Endothelial cell of umbilical vein (primary cell): ENCODE measurements at regions of chr6 and their contacts with region 1.

Region 1: DNA sequence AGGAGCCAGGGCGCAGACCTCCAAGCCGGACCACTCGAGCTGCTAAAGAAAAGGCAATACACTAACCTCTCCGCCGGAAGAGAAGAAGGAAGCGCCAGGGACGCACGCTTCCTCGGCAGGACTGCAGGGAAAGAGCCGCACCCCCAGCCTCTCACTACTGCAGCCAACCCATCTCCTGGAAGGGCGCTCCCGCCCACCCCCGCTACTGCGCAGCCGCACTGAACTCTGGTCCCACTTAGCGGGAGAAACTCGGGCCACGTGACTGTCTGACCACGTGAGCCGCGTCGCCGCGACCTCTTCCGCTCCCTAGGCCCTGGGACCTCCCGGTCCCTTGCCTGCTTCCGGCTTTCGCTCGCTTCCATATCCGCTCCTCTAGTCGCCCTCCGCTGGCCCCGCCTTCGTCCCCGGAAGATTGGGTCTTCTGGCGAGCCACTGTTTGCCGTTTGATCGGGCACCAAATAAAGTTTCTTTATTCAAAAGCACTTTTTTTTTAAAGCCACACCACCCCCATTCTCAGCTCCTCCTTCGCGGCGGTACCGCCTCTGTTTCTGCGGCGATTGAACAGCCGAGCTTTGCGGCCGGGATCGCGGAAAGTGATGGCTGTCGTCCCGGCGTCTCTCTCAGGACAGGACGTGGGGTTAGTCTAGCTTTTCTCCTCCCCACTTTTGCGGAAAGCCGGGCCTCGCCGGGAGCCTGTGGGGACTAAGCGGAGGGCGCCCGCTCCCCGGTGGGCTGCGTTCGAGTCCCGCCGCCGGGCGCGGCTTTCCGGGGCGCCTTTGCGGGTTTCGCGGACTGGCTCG is at the start of gene RMND1:
- DNase-seq: peak; percentile 100
- H3K4me3 ChIP-seq: peak within 1 kb of the TSS; percentile 78 to 100 (median 100)
- H3K27ac ChIP-seq: peak within 1 kb of the TSS; percentile 78
- H3K4me1 ChIP-seq: peaks cover 13% of the 10 kb centered on the region
- H3K27me3 ChIP-seq: no peaks in the 10 kb centered on the region
- CTCF ChIP-seq: no peak
- POLR2A ChIP-seq: peak; percentile 93
- total RNA-seq, gene RMND1: 17.2 and 21.4 TPM in 2 replicates

Region 2: GRCh38 chr6:150857062-150857944 is 594.8 kb before region 1 on chr6:
- CTCF ChIA-PET with region 1: no interaction called
- POLR2A ChIA-PET with region 1: no interaction called
- dilution Hi-C with region 1: no loop called
- intact Hi-C with region 1: loop called (anchors 1 kb)
- DNase-seq: peak; percentile 99
- H3K4me3 ChIP-seq: no peak overlapping the region
- H3K27ac ChIP-seq: peak overlapping the region; percentile 100
- H3K4me1 ChIP-seq: peaks cover 24% of the 10 kb centered on the region
- H3K27me3 ChIP-seq: no peaks in the 10 kb centered on the region
- CTCF ChIP-seq: no peak
- POLR2A ChIP-seq: peak; percentile 83

Region 3: GRCh38 chr6:151036869-151037680 is 415.1 kb before region 1 on chr6:
- CTCF ChIA-PET with region 1: no interaction called
- POLR2A ChIA-PET with region 1: no interaction called
- dilution Hi-C with region 1: no loop called
- intact Hi-C with region 1: loop called (anchors 2 kb)
- DNase-seq: peak; percentile 82
- H3K4me3 ChIP-seq: no peak overlapping the region
- H3K27ac ChIP-seq: peak overlapping the region; percentile 100
- H3K4me1 ChIP-seq: peaks cover 52% of the 10 kb centered on the region
- H3K27me3 ChIP-seq: no peaks in the 10 kb centered on the region
- CTCF ChIP-seq: no peak
- POLR2A ChIP-seq: peak; percentile 44

Region 4: DNA sequence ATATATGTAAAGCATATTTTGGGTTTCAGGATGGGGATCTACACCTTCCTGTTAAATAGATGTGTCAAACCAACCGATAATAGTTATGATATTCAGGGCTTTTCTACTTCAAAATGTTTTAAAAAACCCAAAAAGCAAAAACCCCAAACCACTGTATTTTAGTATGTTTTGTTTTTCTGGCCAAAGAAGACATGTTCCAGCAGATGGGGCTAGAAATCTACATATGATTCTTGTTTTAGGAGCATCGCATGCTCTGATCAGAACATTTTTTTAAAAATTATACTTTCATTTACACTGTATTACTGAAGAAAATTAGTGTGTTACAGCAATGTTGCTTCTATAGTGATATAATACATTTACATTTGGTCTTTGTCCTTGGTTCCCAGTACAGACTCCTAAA is 11.2 kb before region 1 on chr6:
- CTCF ChIA-PET with region 1: interaction called, 15 read pairs
- POLR2A ChIA-PET with region 1: no interaction called
- dilution Hi-C with region 1: no loop called
- intact Hi-C with region 1: no loop called
- DNase-seq: peak; percentile 30
- H3K4me3 ChIP-seq: no peak overlapping the region
- H3K27ac ChIP-seq: no peak overlapping the region
- H3K4me1 ChIP-seq: peaks cover 18% of the 10 kb centered on the region
- H3K27me3 ChIP-seq: no peaks in the 10 kb centered on the region
- CTCF ChIP-seq: peak in 1 of 2 donors; percentile 5
- POLR2A ChIP-seq: no peak

Region 5: DNA sequence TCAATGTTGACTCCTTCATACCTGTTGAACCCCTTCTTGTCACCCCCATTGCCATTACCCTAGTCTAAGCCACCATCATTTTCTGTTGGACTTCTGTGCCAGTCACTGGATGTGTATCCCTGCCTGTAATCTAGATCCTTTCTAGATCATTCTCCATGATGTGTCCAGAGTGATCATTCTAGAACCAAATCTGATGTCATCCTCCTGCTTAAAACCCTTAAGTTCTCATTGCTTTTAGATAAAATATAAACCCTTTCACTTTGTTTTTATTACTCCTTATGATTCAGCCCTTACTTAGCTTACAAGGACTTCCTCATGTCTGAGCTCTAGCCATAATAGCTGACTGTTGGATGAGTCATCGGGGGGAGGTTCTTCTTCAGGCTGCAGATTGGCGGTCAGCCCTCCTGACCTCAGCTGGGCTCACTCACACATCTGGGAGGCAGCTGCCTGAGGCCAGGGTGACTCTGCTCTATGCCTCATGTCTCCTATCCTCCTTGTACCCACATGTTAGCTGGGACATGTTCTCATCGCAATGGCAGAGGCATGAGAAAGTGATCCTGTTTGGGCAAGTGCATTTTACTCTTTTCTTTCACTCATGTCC is 642.9 kb after region 1 on chr6:
- CTCF ChIA-PET with region 1: no interaction called
- POLR2A ChIA-PET with region 1: no interaction called
- dilution Hi-C with region 1: no loop called
- intact Hi-C with region 1: loop called (anchors 5 kb)
- DNase-seq: peak; percentile 97
- H3K4me3 ChIP-seq: no peak overlapping the region
- H3K27ac ChIP-seq: peak overlapping the region; percentile 74
- H3K4me1 ChIP-seq: peaks cover 42% of the 10 kb centered on the region
- H3K27me3 ChIP-seq: no peaks in the 10 kb centered on the region
- CTCF ChIP-seq: no peak
- POLR2A ChIP-seq: no peak